Left ventricle myocardium superior (tissue), 1 donor: ENCODE measurements at regions of chr1 and their contacts with region 1.

Region 1: GRCh38 chr1:59699227-59699847 is 115.4 kb upstream of the HOOK1 start:
- DNase-seq: no peak
- ATAC-seq: peak; percentile 17

Region 2: GRCh38 chr1:58739856-58740466 is 959.4 kb before region 1 on chr1:
- intact Hi-C with region 1: loop called (anchors 5 kb)
- DNase-seq: no peak
- ATAC-seq: peak; percentile 64

Region 3: GRCh38 chr1:59309795-59310548 is 389.4 kb before region 1 on chr1:
- intact Hi-C with region 1: loop called (anchors 10 kb)
- DNase-seq: no peak
- ATAC-seq: no peak

Region 4: GRCh38 chr1:60222360-60223115 is 523.2 kb after region 1 on chr1:
- intact Hi-C with region 1: no loop called
- DNase-seq: no peak
- ATAC-seq: no peak